Breast epithelium (tissue), 4 donors: ENCODE measurements at regions of chr16 and their contacts with region 1.

Region 1: DNA sequence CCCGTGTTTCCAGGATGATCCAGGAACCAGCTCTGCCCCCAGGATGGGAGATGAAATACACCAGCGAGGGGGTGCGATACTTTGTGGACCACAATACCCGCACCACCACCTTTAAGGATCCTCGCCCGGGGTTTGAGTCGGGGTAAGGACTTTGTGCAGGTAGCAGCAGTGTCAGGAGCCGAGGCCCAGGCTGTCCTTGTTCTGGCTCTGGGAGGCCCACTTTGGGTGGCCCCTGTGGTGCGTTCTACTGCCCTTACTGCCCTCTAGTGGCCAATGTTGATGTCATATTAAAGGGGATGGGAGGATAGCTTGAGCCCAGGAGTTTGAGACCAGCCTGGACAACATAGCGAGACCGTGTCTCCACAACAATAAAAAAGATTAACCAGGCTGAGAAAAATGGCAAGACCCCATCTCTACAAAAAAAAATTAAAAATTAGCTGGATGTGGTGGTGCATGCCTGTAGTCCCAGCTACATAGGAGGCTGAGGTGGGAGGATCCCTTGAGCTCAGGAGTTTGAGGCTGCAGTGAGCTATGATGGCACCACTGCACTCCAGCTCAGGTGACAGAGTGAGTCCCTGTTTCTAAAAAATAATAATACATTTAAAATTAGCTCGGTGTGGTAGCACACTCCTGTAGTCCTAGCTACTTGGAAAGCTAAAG is 20.9 kb upstream of the CLEC18A start:
- DNase-seq: no peak
- H3K4me3 ChIP-seq: no peak overlapping the region
- H3K27ac ChIP-seq: no peak overlapping the region
- H3K4me1 ChIP-seq: peaks cover 0 to 18% of the 10 kb centered on the region in 2 donors
- H3K27me3 ChIP-seq: no peaks in the 10 kb centered on the region
- CTCF ChIP-seq: peak; percentile 39 to 81 (median 71)
- POLR2A ChIP-seq: no peak

Region 2: DNA sequence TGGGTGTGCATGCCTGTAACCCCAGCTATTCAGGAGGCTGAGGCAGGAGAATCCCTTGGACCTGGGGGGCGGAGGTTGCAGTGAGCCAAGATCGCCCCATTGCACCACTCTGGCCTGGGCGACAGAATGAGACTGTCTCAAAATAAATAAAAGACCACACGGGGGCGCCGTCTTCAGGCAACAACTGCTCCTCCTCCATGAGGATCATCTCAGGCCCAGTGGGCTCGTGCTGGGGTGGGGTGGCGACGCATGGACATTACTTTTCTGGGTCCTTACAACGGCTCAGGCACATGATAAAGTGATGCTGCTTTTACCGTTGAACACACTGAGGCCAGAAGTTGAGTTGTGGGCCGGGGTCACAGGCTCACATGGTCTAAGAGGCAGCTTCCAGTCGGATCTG is 1563.2 kb before region 1 on chr16:
- intact Hi-C with region 1: no loop called
- DNase-seq: no peak
- H3K4me3 ChIP-seq: no peak overlapping the region
- H3K27ac ChIP-seq: no peak overlapping the region
- H3K4me1 ChIP-seq: no peaks in the 10 kb centered on the region
- H3K27me3 ChIP-seq: no peaks in the 10 kb centered on the region
- CTCF ChIP-seq: peak in 1 of 3 donors; percentile 23
- POLR2A ChIP-seq: no peak

Region 3: DNA sequence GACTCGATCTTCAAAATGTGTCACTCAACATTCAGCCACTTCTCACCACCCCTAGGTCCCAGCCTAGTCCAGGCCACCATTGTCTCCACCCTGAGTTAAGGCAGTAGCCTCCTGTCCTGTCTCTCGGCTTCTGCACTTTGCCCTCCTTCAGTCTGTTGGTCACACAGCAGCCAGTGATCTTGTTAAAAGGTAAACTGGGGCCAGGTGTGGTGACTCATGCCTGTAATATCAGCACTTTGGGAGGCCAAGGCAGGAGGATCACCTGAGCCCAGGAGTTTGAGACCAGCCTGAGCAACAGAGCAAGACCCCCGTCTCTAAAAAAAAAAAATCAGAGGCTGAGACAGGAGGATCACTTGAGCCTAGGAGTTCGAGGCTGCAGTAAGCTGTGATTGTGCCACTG is 142.4 kb before region 1 on chr16:
- intact Hi-C with region 1: loop called (anchors 10 kb)
- DNase-seq: no peak
- H3K4me3 ChIP-seq: no peak overlapping the region
- H3K27ac ChIP-seq: no peak overlapping the region
- H3K4me1 ChIP-seq: no peaks in the 10 kb centered on the region
- H3K27me3 ChIP-seq: no peaks in the 10 kb centered on the region
- CTCF ChIP-seq: no peak
- POLR2A ChIP-seq: no peak

Region 4: DNA sequence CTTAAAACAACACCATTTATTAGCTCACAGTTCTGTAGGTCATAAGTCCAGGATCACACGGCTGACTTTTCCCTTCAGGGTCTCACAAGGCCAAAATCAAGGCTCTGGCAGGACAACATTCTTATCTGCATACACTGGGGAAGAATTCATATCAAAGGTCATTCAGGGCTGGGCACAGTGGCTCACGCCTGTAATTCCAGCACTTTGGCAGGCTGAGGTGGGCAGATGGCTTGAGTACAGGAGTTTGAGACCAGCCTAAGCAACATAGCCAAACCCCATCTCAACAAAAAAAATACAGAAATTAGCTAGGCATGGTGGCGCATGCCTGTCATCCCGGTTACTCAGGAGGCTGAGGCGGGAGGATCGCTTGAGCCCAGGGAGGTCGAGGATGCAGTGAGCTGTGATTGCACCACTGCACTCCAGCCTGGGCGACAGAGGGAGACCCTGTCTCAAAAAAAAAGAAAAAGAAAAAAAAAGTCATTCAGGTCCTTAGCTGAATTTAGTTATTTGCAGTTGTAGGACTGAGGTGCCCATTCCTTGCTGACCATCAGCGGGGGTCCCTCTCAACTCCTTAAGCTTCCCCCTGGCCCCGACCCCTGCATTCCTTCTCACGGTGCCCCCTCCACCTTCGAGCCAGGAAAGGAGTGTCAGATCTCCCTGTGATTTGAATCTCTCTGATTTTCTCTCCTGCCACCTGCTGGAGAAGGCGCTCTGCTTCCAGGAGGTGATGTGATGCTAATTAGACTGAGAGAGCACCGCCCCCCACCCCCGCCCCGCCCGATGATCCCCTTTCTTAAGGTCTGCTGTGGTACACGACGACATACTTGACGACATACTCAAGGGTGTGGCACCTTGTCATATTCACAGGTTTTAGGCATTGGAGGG is 70.9 kb before region 1 on chr16:
- intact Hi-C with region 1: no loop called
- DNase-seq: no peak
- H3K4me3 ChIP-seq: no peak overlapping the region
- H3K27ac ChIP-seq: peak overlapping the region in 1 of 2 donors; percentile 67
- H3K4me1 ChIP-seq: no peaks in the 10 kb centered on the region
- H3K27me3 ChIP-seq: no peaks in the 10 kb centered on the region
- CTCF ChIP-seq: no peak
- POLR2A ChIP-seq: no peak

Region 5: GRCh38 chr16:69894676-69895075 is 35.6 kb before region 1 on chr16:
- intact Hi-C with region 1: loop called (anchors 2 kb)
- DNase-seq: peak in 1 of 2 donors; percentile 61
- H3K4me3 ChIP-seq: no peak overlapping the region
- H3K27ac ChIP-seq: no peak overlapping the region
- H3K4me1 ChIP-seq: no peaks in the 10 kb centered on the region
- H3K27me3 ChIP-seq: no peaks in the 10 kb centered on the region
- CTCF ChIP-seq: no peak
- POLR2A ChIP-seq: no peak

Region 6: GRCh38 chr16:69941251-69942098 is 11.2 kb after region 1 on chr16:
- intact Hi-C with region 1: no loop called
- DNase-seq: no peak
- H3K4me3 ChIP-seq: no peak overlapping the region
- H3K27ac ChIP-seq: peak overlapping the region in 1 of 2 donors; percentile 63
- H3K4me1 ChIP-seq: no peaks in the 10 kb centered on the region
- H3K27me3 ChIP-seq: no peaks in the 10 kb centered on the region
- CTCF ChIP-seq: no peak
- POLR2A ChIP-seq: no peak